Tibial artery (tissue), 4 donors: ENCODE measurements at regions of chr20 and their contacts with region 1.

Region 1: DNA sequence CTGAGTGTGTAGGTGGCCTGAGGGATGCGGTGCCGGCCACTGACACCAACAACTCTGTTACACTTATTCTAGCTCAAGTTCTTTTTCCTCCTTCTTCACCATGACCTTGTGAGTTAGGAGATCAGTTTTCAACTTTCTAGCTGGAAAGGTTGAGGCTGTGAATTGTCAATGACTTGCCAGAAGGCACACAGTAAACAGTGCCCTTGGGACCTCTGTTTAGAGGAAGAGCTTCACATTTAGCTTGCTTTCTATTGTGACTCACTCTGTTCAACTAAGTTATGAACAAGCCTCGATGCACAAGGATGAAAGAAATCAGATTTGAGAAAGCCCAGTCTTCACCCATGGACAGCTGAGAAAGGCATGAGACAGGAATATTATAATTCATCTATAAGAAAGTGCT is 455.6 kb downstream of the MAFB start:
- DNase-seq: no peak
- H3K4me3 ChIP-seq: no peak overlapping the region
- H3K27ac ChIP-seq: no peak overlapping the region
- H3K4me1 ChIP-seq: no peaks in the 10 kb centered on the region
- H3K27me3 ChIP-seq: no peaks in the 10 kb centered on the region
- CTCF ChIP-seq: no peak

Region 2: DNA sequence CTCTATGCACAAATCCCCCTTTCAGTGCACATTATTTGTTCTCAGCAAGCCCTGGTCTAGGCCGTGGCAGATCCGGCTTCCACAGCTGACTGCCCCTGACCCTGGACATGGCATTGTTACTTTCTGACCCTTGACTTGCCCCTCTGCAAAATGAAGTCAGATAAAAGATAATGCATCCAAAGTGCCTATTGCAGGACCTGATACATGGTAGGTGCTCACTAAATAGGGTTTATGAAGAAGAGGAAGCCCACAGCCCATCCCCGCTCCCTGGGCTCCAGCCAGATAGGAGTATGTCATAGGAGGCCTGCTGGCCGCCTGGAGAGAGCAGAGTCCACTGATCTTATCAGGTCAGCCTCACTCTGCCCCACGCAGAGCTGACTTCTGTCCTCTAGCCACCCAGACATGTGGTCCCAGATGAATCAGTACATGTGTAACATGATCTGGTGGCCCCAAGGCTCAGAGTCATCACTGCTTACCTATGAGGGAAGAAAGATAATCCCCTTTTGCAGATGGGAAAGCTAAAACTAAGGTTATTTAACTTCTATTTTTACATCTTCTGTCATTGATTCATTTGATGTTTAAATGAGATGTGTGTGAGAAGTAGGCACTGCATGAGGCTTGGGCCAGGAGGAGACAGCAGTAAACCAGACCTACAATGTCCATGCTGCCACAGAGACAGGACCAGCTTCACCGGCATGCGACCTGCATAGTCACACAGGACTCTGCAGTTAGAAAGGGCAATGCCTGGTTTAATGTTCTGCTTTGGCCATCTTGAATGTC is 435.2 kb after region 1 on chr20:
- intact Hi-C with region 1: loop called (anchors 10 kb)
- DNase-seq: no peak
- H3K4me3 ChIP-seq: no peak overlapping the region
- H3K27ac ChIP-seq: no peak overlapping the region
- H3K4me1 ChIP-seq: no peaks in the 10 kb centered on the region
- H3K27me3 ChIP-seq: peaks cover 0 to 6% of the 10 kb centered on the region in 2 donors
- CTCF ChIP-seq: no peak

Region 3: GRCh38 chr20:40843251-40843650 is 609.8 kb after region 1 on chr20:
- intact Hi-C with region 1: no loop called
- DNase-seq: no peak
- H3K4me3 ChIP-seq: no peak overlapping the region
- H3K27ac ChIP-seq: no peak overlapping the region
- H3K4me1 ChIP-seq: no peaks in the 10 kb centered on the region
- H3K27me3 ChIP-seq: peaks cover 0 to 2% of the 10 kb centered on the region in 2 donors
- CTCF ChIP-seq: no peak